ENCODE measurements at regions of chr1 and their contacts with region 1.

Region 1: DNA sequence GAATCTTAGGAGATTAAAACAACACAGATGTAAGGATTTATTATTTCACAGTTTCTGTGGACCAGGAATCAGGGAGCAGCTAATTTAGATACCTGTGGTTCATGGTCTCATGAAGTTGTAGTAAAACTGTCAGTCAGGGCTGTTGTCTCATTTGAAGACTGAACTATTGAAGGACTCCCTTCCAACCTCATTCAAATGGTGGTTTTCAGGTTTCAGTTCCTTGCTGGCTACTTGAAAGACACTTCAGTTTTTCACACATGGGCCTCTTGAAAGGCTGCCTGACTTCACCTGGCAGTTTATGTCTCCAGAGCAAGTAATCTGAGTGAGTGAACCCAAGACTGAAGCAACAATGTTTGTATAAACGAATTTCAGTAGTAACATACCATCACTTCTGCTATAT is 915.9 kb downstream of the PLA2G4A start:
- DNase-seq: no peak
- H3K4me3 ChIP-seq: no peak overlapping the region
- H3K4me3 Mint-ChIP-seq: no peak overlapping the region
- H3K27ac Mint-ChIP-seq: no peak overlapping the region
- H3K4me1 ChIP-seq: no peaks in the 10 kb centered on the region
- H3K4me1 Mint-ChIP-seq: no peaks in the 10 kb centered on the region
- H3K27me3 ChIP-seq: no peaks in the 10 kb centered on the region
- H3K27me3 Mint-ChIP-seq: no peaks in the 10 kb centered on the region
- CTCF ChIP-seq: no peak

Region 2: GRCh38 chr1:187755536-187755935 is 10.9 kb after region 1 on chr1:
- CTCF ChIA-PET with region 1: no interaction called
- POLR2A ChIA-PET with region 1: no interaction called
- intact Hi-C with region 1: loop called (anchors 1 kb)
- DNase-seq: no peak
- H3K4me3 ChIP-seq: no peak overlapping the region
- H3K4me3 Mint-ChIP-seq: no peak overlapping the region
- H3K27ac Mint-ChIP-seq: no peak overlapping the region
- H3K4me1 ChIP-seq: no peaks in the 10 kb centered on the region
- H3K4me1 Mint-ChIP-seq: no peaks in the 10 kb centered on the region
- H3K27me3 ChIP-seq: no peaks in the 10 kb centered on the region
- H3K27me3 Mint-ChIP-seq: no peaks in the 10 kb centered on the region
- CTCF ChIP-seq: no peak

Region 3: DNA sequence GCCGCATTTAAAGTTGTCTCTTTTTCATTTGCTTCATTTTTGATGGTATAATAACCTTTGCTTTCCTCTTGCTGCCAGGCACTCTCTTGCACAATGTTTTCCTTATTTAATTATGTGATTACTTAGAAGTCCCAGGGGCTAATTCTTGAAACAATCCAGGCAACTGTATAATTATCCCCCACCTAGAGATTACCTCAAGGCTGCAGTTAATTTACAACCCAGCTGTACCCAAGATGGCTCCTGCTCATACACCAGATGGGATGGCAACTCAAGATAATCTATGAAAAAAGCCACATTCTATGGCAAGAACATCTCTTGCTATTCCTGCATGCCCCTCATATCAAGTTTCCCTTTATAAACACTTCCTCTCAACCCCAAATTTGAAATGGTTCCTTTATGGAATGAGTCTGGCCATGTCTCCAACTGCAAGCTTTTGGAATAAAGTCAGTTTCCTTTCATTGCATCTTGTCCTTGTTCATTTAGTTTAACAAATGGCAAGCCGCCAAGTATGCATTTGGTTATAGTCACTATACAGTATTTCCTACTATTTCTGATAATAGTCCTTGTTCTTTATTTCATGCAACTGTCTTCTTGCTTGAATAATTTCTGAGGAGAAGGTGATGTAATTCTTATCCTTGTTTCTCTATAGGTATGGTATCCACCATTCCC is 126.6 kb after region 1 on chr1:
- CTCF ChIA-PET with region 1: no interaction called
- POLR2A ChIA-PET with region 1: no interaction called
- intact Hi-C with region 1: no loop called
- DNase-seq: no peak
- H3K4me3 ChIP-seq: no peak overlapping the region
- H3K4me3 Mint-ChIP-seq: no peak overlapping the region
- H3K27ac Mint-ChIP-seq: no peak overlapping the region
- H3K4me1 ChIP-seq: no peaks in the 10 kb centered on the region
- H3K4me1 Mint-ChIP-seq: no peaks in the 10 kb centered on the region
- H3K27me3 ChIP-seq: no peaks in the 10 kb centered on the region
- H3K27me3 Mint-ChIP-seq: peaks cover 6% of the 10 kb centered on the region
- CTCF ChIP-seq: no peak

Measured in Caco-2 (cell line).